ENCODE measurements at regions of chr1 and their contacts with region 1.

Region 1: DNA sequence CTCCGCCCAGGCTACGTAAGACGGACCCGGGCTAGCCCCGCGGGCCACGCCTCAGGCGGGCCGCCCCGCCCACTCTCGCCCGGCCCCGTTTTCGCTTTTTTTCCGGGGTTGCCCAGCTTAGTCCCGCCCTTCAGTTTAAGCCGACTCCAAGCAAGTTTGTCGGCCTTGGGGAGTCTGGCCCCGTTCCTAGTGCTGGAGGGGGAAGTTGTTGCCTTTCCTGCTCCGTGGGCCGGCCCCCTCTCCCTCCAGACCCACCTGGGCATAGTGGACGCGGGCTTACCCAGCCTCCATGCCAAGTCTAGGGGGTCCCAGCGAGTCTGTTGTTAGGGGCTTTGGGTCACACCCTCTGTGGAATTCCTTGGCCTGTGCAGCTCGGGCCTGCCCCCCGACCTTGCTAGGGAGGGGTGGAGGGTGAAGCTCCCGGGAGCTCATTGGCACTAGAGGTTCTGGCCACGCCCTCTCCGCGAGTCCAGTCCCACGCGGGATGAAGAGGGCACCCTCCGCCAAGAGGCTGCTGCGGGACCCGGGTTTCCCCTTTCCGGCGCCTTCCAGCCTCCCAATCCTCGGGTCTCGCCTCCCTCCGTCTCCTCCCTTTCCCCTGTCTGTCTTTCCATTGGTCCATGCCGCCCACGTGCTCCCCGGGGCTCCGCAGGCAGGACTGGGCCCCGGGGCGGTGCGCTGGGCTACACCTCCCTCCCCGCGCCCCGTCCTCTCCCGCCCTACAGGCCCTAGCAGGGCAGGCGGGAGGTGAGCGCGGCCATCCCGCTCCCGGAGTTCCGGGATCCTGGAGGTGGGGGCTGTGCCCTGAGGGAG is 3.3 kb downstream of the RUSC1 start:
- DNase-seq: peak; percentile 94 to 96
- ATAC-seq: peak; percentile 85 to 92 (median 90)
- H3K4me3 ChIP-seq: peak overlapping the region; percentile 67 to 95 (median 84)
- H3K27ac ChIP-seq: peak overlapping the region; percentile 91 to 98 (median 97)
- H3K4me1 ChIP-seq: peaks cover 7 to 54% (median 40%) of the 10 kb centered on the region in 9 donors
- H3K27me3 ChIP-seq: no peaks in the 10 kb centered on the region
- CTCF ChIP-seq: no peak

Region 2: DNA sequence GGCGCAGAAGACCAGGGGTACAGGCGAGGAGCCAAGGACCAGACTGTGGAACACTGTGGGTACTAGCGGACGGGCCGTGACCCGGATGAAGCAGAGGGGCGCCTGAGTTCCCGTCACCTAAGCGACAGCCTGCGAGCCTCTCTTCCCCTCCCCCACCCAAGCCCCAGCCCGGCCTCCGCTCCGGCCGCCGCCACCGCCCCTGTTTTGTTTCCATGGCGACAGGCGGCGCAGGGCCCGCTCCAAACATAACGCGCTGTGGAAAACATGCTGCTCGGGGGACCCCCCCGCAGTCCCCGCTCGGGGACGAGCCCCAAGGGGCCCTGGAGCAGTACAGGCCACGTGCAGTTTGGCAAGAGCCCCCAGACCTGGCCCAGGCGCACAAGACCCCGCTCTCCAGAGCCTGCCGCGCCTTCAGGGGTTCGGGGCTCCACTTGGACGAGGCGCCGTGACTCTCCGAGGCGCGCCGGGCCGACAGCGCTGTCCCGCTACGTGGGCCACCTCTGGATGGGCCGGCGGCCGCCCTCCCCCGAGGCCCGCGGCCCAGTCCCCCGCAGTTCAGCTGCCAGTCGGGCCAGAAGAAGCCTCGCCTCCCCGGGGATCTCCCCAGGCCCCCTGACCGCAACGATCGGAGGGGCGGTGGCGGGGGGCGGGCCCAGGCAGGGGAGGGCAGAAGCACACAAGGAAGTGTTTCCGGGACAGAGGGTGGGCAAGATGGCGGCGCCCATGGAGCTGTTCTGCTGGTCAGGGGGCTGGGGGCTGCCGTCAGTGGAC is 115.3 kb before region 1 on chr1 and contains the start of gene MTX1:
- intact Hi-C with region 1: loop called in 2 of 10 experiments (anchors 5 kb)
- DNase-seq: peak; percentile 93 to 95
- ATAC-seq: peak; percentile 86 to 92 (median 90)
- H3K4me3 ChIP-seq: peak within 1 kb of the TSS; percentile 64 to 91 (median 82)
- H3K27ac ChIP-seq: peak within 1 kb of the TSS; percentile 98 to 100 (median 100)
- H3K4me1 ChIP-seq: peaks cover 9 to 43% (median 31%) of the 10 kb centered on the region in 9 donors
- H3K27me3 ChIP-seq: no peaks in the 10 kb centered on the region
- CTCF ChIP-seq: no peak
- total RNA-seq, gene MTX1: 13.1 to 25.8 (median 17.1) TPM

Region 3: GRCh38 chr1:155250633-155251449 is 73.2 kb before region 1 on chr1:
- intact Hi-C with region 1: loop called in 9 of 10 experiments (anchors 1 to 5 kb)
- DNase-seq: peak; percentile 93 to 95
- ATAC-seq: peak; percentile 80 to 89 (median 84)
- H3K4me3 ChIP-seq: peak overlapping the region in 7 of 10 donors; percentile 12 to 57 (median 37)
- H3K27ac ChIP-seq: peak overlapping the region in 8 of 10 donors; percentile 15 to 90 (median 38)
- H3K4me1 ChIP-seq: peaks cover 12 to 36% (median 29%) of the 10 kb centered on the region in 9 donors
- H3K27me3 ChIP-seq: no peaks in the 10 kb centered on the region
- CTCF ChIP-seq: peak in 8 of 9 donors; percentile 99 to 100 (median 100)

Region 4: GRCh38 chr1:155277070-155277895 is 46.7 kb before region 1 on chr1 and contains the start of gene HCN3:
- intact Hi-C with region 1: loop called in 7 of 10 experiments (anchors 1 to 5 kb)
- DNase-seq: peak; percentile 98
- ATAC-seq: peak; percentile 89 to 94 (median 90)
- H3K4me3 ChIP-seq: peak within 1 kb of the TSS; percentile 51 to 98 (median 70)
- H3K27ac ChIP-seq: peak within 1 kb of the TSS in 9 of 10 donors; percentile 49 to 72 (median 61)
- H3K4me1 ChIP-seq: peaks cover 6 to 34% (median 30%) of the 10 kb centered on the region in 9 donors
- H3K27me3 ChIP-seq: no peaks in the 10 kb centered on the region
- CTCF ChIP-seq: peak; percentile 64 to 97 (median 84)
- total RNA-seq, gene HCN3: 0.68 to 1.7 (median 1.0) TPM

Region 5: GRCh38 chr1:155308493-155309422 is 15.2 kb before region 1 on chr1 and contains the start of gene FDPS:
- intact Hi-C with region 1: loop called in 1 of 10 experiments (anchors 1 kb)
- DNase-seq: peak; percentile 98 to 99
- ATAC-seq: peak; percentile 99 to 100 (median 99)
- H3K4me3 ChIP-seq: peak within 1 kb of the TSS; percentile 53 to 99 (median 81)
- H3K27ac ChIP-seq: peak within 1 kb of the TSS; percentile 74 to 97 (median 92)
- H3K4me1 ChIP-seq: peaks cover 0 to 40% (median 36%) of the 10 kb centered on the region in 9 donors
- H3K27me3 ChIP-seq: no peaks in the 10 kb centered on the region
- CTCF ChIP-seq: peak in 3 of 9 donors; percentile 3 to 26 (median 19)
- total RNA-seq, gene FDPS: 63.1 to 108 (median 76.9) TPM

Region 6: DNA sequence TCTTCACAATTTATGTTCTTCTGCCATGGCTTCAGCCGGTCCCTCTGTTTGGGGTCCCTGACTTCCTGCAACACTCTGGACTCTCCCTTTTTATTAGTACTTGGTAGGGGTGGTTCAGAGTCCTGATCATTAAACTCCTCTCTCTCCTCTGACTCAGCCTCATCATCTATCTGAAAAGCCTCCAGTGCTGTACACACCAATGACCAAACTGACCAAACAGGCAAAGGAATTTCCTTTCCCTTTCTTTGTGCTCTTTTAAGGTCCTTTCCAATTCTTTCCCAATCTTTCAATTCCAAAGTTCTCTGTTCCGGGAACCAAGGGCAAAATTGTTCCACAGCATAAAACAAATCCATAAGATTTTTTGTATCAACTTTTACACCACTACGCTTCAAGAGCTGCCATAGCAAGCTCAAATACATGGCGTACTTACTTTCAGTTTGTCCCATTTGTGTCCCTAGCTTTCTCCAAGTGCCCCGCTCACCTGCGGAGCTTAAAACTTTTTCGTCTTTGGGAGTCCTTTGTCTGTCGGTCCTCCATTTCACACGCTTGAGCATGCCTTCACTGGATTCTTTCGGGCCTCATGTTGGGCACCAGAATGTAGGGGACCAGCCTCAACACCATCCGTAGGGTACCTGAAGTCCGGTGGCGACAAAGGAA is 374.5 kb after region 1 on chr1:
- intact Hi-C with region 1: no loop called
- DNase-seq: no peak
- ATAC-seq: no peak
- H3K4me3 ChIP-seq: no peak overlapping the region
- H3K27ac ChIP-seq: no peak overlapping the region
- H3K4me1 ChIP-seq: peaks cover 0 to 37% (median 25%) of the 10 kb centered on the region in 9 donors
- H3K27me3 ChIP-seq: no peaks in the 10 kb centered on the region
- CTCF ChIP-seq: no peak